ENCODE measurements at regions of chr10 and their contacts with region 1.

Region 1: DNA sequence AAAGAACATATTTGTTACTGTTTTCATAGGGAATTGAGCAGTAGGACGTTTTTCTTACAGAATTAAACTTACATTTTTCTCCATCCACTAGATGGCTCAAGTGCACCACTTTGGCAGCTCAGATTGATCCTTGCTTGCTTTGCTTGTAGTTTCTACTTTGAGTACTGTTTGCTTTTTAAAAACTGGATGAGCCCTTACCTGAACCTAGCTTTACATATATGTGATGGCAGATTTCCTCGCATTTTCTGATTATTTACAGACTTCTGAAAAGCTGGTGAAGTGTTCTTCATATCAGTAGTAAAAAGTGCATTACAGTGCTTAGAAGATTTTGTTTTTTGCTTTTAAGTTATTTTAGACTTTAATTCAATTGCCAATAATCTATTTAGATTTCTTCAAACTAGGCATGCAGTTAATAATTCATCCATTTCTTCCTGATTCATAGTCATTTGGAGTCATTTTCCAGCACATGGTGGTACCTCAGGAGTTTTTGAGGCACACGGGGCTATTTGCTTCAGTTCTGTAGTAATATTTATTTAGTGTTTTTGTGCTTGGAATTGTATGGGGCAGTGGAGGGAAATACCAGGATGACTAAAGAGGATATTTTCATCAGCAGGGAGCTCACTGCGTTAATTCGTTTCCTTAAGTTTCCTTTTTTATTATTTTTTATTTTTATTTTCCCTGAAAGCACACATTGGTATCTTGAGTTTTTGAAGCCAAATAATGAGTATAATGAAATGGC is 57.3 kb downstream of the MAPK8 start:
- DNase-seq: peak; percentile 28 to 42
- H3K4me3 ChIP-seq: no peak overlapping the region
- H3K27ac ChIP-seq: no peak overlapping the region
- H3K4me1 ChIP-seq: peaks cover 7% of the 10 kb centered on the region; the same call in 1 of the 2 replicates
- H3K27me3 ChIP-seq: no peaks in the 10 kb centered on the region
- CTCF ChIP-seq: peak; percentile 83

Region 2: GRCh38 chr10:47024399-47025252 is 1339.2 kb before region 1 on chr10:
- CTCF ChIA-PET with region 1: no interaction called
- POLR2A ChIA-PET with region 1: no interaction called
- intact Hi-C with region 1: no loop called
- DNase-seq: peak; percentile 50 to 81
- H3K4me3 ChIP-seq: no peak overlapping the region
- H3K27ac ChIP-seq: no peak overlapping the region
- H3K4me1 ChIP-seq: no peaks in the 10 kb centered on the region
- H3K27me3 ChIP-seq: no peaks in the 10 kb centered on the region
- CTCF ChIP-seq: peak; percentile 93

Region 3: DNA sequence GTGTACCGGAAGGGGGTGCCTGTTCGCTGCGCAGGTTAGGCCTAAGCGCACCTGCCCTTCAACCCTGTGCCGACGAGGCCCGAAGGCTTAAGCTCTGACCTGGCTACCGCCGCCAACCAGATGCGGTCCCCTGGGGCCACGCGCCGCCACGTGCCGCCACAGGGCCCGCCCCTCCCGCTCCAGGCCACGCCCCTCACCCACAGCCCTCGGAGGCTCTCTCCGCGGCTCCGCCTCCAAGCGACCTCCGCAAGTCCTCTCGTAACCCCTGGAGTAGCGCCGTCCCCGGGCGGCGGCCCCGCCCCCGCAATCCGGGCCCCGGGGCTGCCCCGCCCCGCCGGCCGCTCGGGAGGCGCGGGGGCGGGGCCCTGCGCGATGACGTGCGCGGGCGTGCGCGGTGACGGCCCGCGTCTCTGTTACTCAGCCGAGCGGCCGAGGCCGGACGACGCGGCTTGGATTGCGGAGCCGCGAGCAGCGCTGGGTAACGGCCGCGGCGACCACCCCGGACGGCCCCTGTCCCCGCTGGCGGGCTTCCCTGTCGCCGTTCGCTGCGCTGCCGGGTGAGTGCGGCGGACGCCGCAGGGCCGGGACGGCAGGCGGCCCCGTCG is 57.4 kb before region 1 on chr10 and contains the start of gene MAPK8:
- CTCF ChIA-PET with region 1: no interaction called
- POLR2A ChIA-PET with region 1: no interaction called
- intact Hi-C with region 1: loop called (anchors 5 kb)
- DNase-seq: peak; percentile 77 to 96
- H3K4me3 ChIP-seq: peak within 1 kb of the TSS; percentile 85
- H3K27ac ChIP-seq: peak within 1 kb of the TSS; percentile 14; the same call in 1 of the 2 replicates
- H3K4me1 ChIP-seq: peaks cover 45% of the 10 kb centered on the region
- H3K27me3 ChIP-seq: no peaks in the 10 kb centered on the region
- CTCF ChIP-seq: no peak
- total RNA-seq, gene MAPK8: 67.5 and 72.1 TPM in 2 replicates

Region 4: GRCh38 chr10:48389272-48389671 is 25.5 kb after region 1 on chr10:
- CTCF ChIA-PET with region 1: no interaction called
- POLR2A ChIA-PET with region 1: no interaction called
- intact Hi-C with region 1: no loop called
- DNase-seq: no peak
- H3K4me3 ChIP-seq: no peak overlapping the region
- H3K27ac ChIP-seq: no peak overlapping the region
- H3K4me1 ChIP-seq: peaks cover 15% of the 10 kb centered on the region
- H3K27me3 ChIP-seq: no peaks in the 10 kb centered on the region
- CTCF ChIP-seq: no peak

Region 5: DNA sequence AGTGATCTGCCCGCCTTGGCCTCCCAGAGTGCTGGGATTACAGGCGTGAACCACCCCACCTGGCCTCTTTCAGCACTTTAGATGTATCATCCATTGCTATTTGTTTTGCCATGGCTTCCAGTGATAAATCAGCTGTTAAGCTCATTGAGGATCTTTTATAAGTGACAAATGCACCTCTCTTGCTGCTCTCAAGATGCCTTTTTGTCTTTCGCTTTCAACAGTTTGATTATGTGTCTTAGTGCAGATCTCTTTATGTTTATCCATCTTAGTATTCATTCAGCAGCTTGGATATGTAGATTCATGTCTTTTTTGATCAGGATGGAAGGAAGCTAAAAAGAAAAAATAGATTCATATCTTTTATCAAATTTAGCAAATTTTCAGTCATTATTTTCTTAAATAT is 48.3 kb after region 1 on chr10:
- CTCF ChIA-PET with region 1: interaction called, 13 read pairs
- POLR2A ChIA-PET with region 1: no interaction called
- intact Hi-C with region 1: no loop called
- DNase-seq: no peak
- H3K4me3 ChIP-seq: no peak overlapping the region
- H3K27ac ChIP-seq: no peak overlapping the region
- H3K4me1 ChIP-seq: no peaks in the 10 kb centered on the region
- H3K27me3 ChIP-seq: no peaks in the 10 kb centered on the region
- CTCF ChIP-seq: no peak

Region 6: GRCh38 chr10:48506147-48506917 is 142.5 kb after region 1 on chr10:
- CTCF ChIA-PET with region 1: interaction called, 4 read pairs
- POLR2A ChIA-PET with region 1: no interaction called
- intact Hi-C with region 1: loop called (anchors 1 kb)
- DNase-seq: peak in 1 of 2 experiments; percentile 26
- H3K4me3 ChIP-seq: no peak overlapping the region
- H3K27ac ChIP-seq: no peak overlapping the region
- H3K4me1 ChIP-seq: peaks cover 4% of the 10 kb centered on the region; the same call in 1 of the 2 replicates
- H3K27me3 ChIP-seq: no peaks in the 10 kb centered on the region
- CTCF ChIP-seq: peak; percentile 56

Region 7: GRCh38 chr10:48551861-48552591 is 188.2 kb after region 1 on chr10:
- CTCF ChIA-PET with region 1: no interaction called
- POLR2A ChIA-PET with region 1: no interaction called
- intact Hi-C with region 1: loop called (anchors 2 kb)
- DNase-seq: peak in 1 of 2 experiments; percentile 47
- H3K4me3 ChIP-seq: no peak overlapping the region
- H3K27ac ChIP-seq: no peak overlapping the region
- H3K4me1 ChIP-seq: no peaks in the 10 kb centered on the region
- H3K27me3 ChIP-seq: no peaks in the 10 kb centered on the region
- CTCF ChIP-seq: peak; percentile 89

Region 8: DNA sequence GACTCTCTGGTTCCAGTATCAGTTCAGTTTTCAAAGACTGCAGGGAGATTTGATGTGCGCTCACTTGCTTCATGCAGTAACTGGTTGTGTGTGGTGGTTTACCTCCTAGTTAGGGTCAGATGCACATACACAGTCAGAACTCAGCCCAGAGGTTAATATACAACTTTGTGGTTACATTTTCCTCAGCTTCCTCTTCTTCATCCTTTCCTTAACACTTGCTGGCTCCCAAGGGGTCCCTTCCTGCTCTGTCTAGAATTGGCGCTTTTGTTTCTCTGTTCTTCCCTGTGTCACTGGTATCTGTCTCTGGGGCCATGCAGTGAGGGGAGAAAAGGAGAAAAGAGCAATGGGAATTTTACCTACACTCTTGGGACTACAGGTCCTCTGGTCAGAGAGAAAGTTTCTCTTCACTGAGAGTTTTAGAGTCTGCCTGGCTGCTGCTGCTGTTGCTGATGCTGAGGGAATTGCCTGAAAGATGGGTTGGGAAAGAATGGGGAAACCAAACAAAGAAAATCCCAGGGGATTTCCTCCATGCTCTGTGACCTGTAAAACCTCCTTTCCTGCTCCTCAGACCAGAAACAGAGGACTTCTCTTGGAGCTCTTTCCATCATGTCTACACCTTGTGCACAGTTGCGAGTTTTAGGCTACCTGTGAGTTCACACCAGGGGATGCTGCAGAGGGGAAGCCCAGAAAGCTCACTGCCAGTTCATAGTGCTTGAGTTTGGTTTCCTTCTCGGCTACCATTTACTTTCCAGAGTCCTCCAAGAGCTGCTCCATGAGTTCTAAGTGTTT is 395.5 kb after region 1 on chr10:
- CTCF ChIA-PET with region 1: no interaction called
- POLR2A ChIA-PET with region 1: no interaction called
- intact Hi-C with region 1: no loop called
- DNase-seq: no peak
- H3K4me3 ChIP-seq: no peak overlapping the region
- H3K27ac ChIP-seq: no peak overlapping the region
- H3K4me1 ChIP-seq: no peaks in the 10 kb centered on the region
- H3K27me3 ChIP-seq: peaks cover 73% of the 10 kb centered on the region
- CTCF ChIP-seq: no peak